H1 (cell line): ENCODE measurements at regions of chr10 and their contacts with region 1.

Region 1: GRCh38 chr10:167383-167782 is 32.1 kb downstream of the ZMYND11 start:
- DNase-seq: no peak
- H3K4me3 ChIP-seq: no peak overlapping the region
- H3K27ac ChIP-seq: no peak overlapping the region
- H3K4me1 ChIP-seq: peaks cover 0 to 3% (median 0%) of the 10 kb centered on the region in 4 experiments; a peak in 2 of 7 replicates
- H3K27me3 ChIP-seq: no peaks in the 10 kb centered on the region
- CTCF ChIP-seq: no peak
- EP300 ChIP-seq: no peak
- POLR2A ChIP-seq: no peak
- RAD21 ChIP-seq: no peak

Region 2: GRCh38 chr10:135601-136464 is 31.6 kb before region 1 on chr10:
- CTCF ChIA-PET with region 1: interaction called, 11 read pairs
- POLR2A ChIA-PET with region 1: interaction called, 4 read pairs
- DNase-seq: peak in 1 of 2 experiments; percentile 73
- H3K4me3 ChIP-seq: peak overlapping the region; percentile 53 to 72 (median 69)
- H3K27ac ChIP-seq: peak overlapping the region; percentile 35; the same call in 1 of the 2 replicates
- H3K4me1 ChIP-seq: peaks cover 0 to 4% (median 3%) of the 10 kb centered on the region in 4 experiments; a peak in 4 of 7 replicates
- H3K27me3 ChIP-seq: peaks cover 0 to 15% (median 7%) of the 10 kb centered on the region in 4 experiments; a peak in 5 of 7 replicates
- CTCF ChIP-seq: no peak
- EP300 ChIP-seq: no peak
- POLR2A ChIP-seq: peak; percentile 33 to 51; a peak in 2 of 3 replicates
- RAD21 ChIP-seq: no peak